Spleen (tissue), 13 donors: ENCODE measurements at regions of chr3 and their contacts with region 1.

Region 1: GRCh38 chr3:31132132-31132769 is 237.8 kb upstream of the GADL1 start:
- DNase-seq: no peak
- H3K4me3 ChIP-seq: no peak overlapping the region
- H3K27ac ChIP-seq: no peak overlapping the region
- H3K4me1 ChIP-seq: no peaks in the 10 kb centered on the region
- H3K27me3 ChIP-seq: no peaks in the 10 kb centered on the region
- CTCF ChIP-seq: peak in 7 of 11 experiments; percentile 17 to 51 (median 42)
- POLR2A ChIP-seq: no peak

Region 2: GRCh38 chr3:30768703-30769685 is 363.3 kb before region 1 on chr3:
- intact Hi-C with region 1: loop called (anchors 5 kb)
- DNase-seq: peak; percentile 83
- H3K4me3 ChIP-seq: no peak overlapping the region
- H3K27ac ChIP-seq: no peak overlapping the region
- H3K4me1 ChIP-seq: peaks cover 0 to 7% (median 1%) of the 10 kb centered on the region in 6 donors
- H3K27me3 ChIP-seq: no peaks in the 10 kb centered on the region
- CTCF ChIP-seq: peak; percentile 13 to 81 (median 66)
- POLR2A ChIP-seq: no peak